ENCODE measurements at regions of chr16 and their contacts with region 1.

Region 1: DNA sequence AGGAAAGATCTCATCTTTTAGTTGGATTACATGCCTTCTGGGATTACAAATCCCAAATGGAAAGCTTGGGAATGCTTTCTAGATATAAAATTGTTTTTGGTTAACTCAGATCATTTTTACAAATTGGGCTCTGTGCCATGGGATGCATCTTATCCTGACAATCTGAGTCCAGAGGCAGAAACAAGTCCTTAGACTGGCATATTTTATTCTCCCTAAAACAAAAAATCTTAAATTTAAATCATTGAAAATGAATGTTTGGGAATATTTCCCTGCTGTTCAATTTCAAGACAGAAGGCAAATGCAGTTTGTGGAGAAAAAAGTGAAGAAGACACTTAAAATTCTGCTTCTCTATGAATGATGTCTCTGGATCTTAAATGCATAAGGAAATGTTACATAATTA is 456.6 kb upstream of the GOT2 start:
- DNase-seq: no peak
- H3K4me3 ChIP-seq: no peak overlapping the region
- H3K27ac ChIP-seq: no peak overlapping the region
- H3K4me1 ChIP-seq: no peaks in the 10 kb centered on the region
- H3K27me3 ChIP-seq: no peaks in the 10 kb centered on the region
- CTCF ChIP-seq: no peak

Region 2: GRCh38 chr16:59170099-59170712 is 20.5 kb before region 1 on chr16:
- intact Hi-C with region 1: loop called (anchors 1 kb)
- DNase-seq: no peak
- H3K4me3 ChIP-seq: no peak overlapping the region
- H3K27ac ChIP-seq: no peak overlapping the region
- H3K4me1 ChIP-seq: no peaks in the 10 kb centered on the region
- H3K27me3 ChIP-seq: no peaks in the 10 kb centered on the region
- CTCF ChIP-seq: no peak

Region 3: GRCh38 chr16:59259074-59259949 is 68.6 kb after region 1 on chr16:
- intact Hi-C with region 1: no loop called
- DNase-seq: no peak
- H3K4me3 ChIP-seq: no peak overlapping the region
- H3K27ac ChIP-seq: no peak overlapping the region
- H3K4me1 ChIP-seq: no peaks in the 10 kb centered on the region
- H3K27me3 ChIP-seq: no peaks in the 10 kb centered on the region
- CTCF ChIP-seq: no peak